Gastrocnemius medialis (tissue), 4 donors: ENCODE measurements at regions of chr1 and their contacts with region 1.

Region 1: DNA sequence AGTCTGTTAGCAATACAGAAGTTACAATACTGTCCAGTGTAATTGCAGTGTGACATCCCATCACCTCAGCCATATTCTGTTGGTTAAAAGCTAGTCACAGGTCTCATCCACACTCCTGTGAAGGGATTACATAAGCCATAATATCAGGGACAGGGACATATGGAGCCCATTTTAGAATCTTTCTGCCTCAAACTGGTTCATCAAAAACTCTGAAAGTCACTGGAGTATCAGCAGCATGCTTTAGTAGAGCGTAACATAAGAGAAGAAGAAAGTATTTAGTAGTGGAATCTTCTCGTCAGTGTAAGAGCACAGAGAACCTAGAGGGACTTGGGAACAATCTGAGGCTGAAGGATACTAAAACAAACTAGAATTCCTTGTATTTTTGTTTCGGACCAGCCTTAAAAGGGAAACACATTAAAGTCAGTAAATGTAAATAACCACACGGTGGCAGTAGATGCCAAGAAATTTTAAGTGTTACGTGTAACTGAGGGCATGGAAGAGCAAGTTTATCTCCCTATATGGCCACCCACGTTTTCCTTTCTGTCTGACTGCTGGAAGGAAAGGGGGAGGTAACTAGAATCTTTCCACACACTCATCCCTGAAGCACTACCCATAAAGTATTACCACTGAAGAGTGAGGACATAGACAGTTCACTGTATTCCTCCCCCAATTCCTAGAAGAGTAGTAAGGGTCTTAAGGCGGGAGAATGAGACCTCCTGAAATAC is 41.6 kb upstream of the AGL start:
- DNase-seq: peak; percentile 38 to 40
- ATAC-seq: peak; percentile 97 to 99
- H3K4me3 ChIP-seq: peak overlapping the region; percentile 19 to 47 (median 25)
- H3K27ac ChIP-seq: peak overlapping the region; percentile 10 to 77 (median 68)
- H3K4me1 ChIP-seq: peaks cover 9 to 10% of the 10 kb centered on the region in 2 donors
- H3K27me3 ChIP-seq: no peaks in the 10 kb centered on the region
- CTCF ChIP-seq: peak; percentile 55 to 71 (median 66)
- POLR2A ChIP-seq: no peak

Region 2: DNA sequence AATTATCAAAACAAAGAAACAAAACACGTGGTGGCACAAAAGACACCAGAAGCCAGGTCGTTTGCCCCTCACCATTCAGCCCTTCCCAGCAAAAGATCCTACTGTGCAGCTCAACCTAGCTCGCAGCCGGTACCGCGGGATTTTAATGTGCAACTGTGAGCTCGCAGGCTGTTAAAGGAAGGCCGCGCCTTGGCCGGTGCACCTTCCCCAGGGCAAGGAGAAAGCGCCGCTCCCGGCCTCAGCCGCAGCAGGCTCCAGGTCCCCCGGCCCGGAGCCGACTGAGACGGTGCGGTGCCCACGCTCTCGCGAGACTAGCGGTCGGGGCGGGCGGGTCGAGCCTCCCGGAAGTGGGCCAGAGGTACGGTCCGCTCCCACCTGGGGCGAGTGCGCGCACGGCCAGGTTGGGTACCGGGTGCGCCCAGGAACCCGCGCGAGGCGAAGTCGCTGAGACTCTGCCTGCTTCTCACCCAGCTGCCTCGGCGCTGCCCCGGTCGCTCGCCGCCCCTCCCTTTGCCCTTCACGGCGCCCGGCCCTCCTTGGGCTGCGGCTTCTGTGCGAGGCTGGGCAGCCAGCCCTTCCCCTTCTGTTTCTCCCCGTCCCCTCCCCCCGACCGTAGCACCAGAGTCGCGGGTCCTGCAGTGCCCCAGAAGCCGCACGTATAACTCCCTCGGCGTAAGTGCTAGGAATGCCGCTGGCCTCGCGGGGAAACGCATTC is 41.3 kb after region 1 on chr1 and contains the start of gene AGL:
- in situ Hi-C with region 1: loop called in 1 of 4 experiments (anchors 5 kb)
- intact Hi-C with region 1: loop called (anchors 2 kb)
- DNase-seq: peak; percentile 82 to 91
- ATAC-seq: peak; percentile 81 to 85
- H3K4me3 ChIP-seq: peak within 1 kb of the TSS; percentile 79 to 89 (median 86)
- H3K27ac ChIP-seq: peak within 1 kb of the TSS; percentile 94 to 95 (median 94)
- H3K4me1 ChIP-seq: peaks cover 51 to 55% of the 10 kb centered on the region in 2 donors
- H3K27me3 ChIP-seq: no peaks in the 10 kb centered on the region
- CTCF ChIP-seq: no peak
- POLR2A ChIP-seq: peak; percentile 87 to 89
- total RNA-seq, gene AGL: 49.3 to 143 (median 103) TPM

Region 3: DNA sequence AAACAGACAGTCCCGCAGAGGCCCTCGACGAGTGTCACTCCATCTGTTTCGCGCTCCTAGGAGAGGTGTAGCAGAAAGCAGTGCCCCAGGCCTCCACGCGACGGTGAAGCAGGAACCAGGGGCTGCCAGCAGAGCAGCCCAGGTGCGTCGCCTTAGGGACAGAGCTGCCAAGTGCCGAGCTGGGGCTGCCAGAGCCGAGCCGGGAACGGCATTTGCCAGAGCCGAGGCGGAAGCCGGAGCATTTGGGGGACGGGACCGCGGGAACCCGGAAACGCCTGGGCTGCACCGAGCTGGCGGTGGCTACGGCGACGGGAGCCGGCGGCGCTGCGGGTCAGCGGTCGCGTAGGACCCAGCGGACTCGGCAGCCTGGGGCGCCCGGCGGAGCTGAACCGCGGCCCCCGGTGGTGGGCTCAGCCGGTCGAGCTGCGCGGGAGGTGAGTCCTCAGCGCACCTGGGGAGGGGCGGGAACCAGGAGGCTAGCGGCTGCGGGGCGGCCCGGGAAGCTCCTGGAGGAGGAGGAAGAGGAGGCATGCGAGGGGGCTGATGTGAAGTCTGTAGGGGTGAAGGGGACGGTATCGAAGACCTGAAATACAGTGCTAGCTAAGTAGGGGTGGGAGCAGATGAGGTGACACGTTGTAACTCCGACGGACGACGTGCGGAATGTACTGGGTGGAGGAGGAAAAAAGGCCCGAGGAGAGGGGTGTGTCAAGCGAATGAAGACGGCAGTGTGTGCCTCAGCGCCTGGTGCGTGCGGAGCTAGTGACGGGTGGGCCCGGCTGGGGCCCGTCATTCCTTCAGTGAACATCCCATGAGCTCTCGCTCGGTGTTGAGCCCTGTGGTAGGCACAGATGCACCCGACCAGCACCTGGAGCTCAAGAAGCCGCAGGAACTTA is 161.4 kb after region 1 on chr1 and contains the start of gene SLC35A3:
- in situ Hi-C with region 1: no loop called
- intact Hi-C with region 1: loop called (anchors 10 kb)
- DNase-seq: peak; percentile 51 to 72
- ATAC-seq: peak; percentile 85 to 92
- H3K4me3 ChIP-seq: peak within 1 kb of the TSS; percentile 84 to 95 (median 86)
- H3K27ac ChIP-seq: peak within 1 kb of the TSS; percentile 58 to 76 (median 72)
- H3K4me1 ChIP-seq: peaks cover 6 to 8% of the 10 kb centered on the region in 2 donors
- H3K27me3 ChIP-seq: no peaks in the 10 kb centered on the region
- CTCF ChIP-seq: no peak
- POLR2A ChIP-seq: peak in 1 of 2 donors; percentile 10
- total RNA-seq, gene SLC35A3: 4.6 to 10.3 (median 8.2) TPM

Region 4: GRCh38 chr1:100459358-100460114 is 651.0 kb after region 1 on chr1:
- in situ Hi-C with region 1: loop called in 3 of 4 experiments (anchors 10 to 25 kb)
- intact Hi-C with region 1: loop called (anchors 5 kb)
- DNase-seq: peak; percentile 49 to 64
- ATAC-seq: peak; percentile 96 to 98
- H3K4me3 ChIP-seq: no peak overlapping the region
- H3K27ac ChIP-seq: peak overlapping the region; percentile 21 to 63 (median 29)
- H3K4me1 ChIP-seq: peaks cover 0 to 11% of the 10 kb centered on the region in 2 donors
- H3K27me3 ChIP-seq: no peaks in the 10 kb centered on the region
- CTCF ChIP-seq: peak; percentile 76 to 88 (median 81)
- POLR2A ChIP-seq: no peak

Region 5: GRCh38 chr1:100866041-100866900 is 1057.7 kb after region 1 on chr1:
- in situ Hi-C with region 1: loop called in 2 of 4 experiments (anchors 10 to 25 kb)
- intact Hi-C with region 1: loop called (anchors 5 kb)
- DNase-seq: no peak
- ATAC-seq: peak in 1 of 2 donors; percentile 44
- H3K4me3 ChIP-seq: no peak overlapping the region
- H3K27ac ChIP-seq: no peak overlapping the region
- H3K4me1 ChIP-seq: peaks cover 0 to 4% of the 10 kb centered on the region in 2 donors
- H3K27me3 ChIP-seq: no peaks in the 10 kb centered on the region
- CTCF ChIP-seq: peak in 4 of 5 experiments; percentile 26 to 46 (median 41)
- POLR2A ChIP-seq: no peak